ENCODE measurements at regions of chr7 and their contacts with region 1.

Region 1: GRCh38 chr7:107879400-107880035 is 11.5 kb upstream of the DLD start:
- DNase-seq: no peak
- H3K4me3 ChIP-seq: no peak overlapping the region
- H3K27ac ChIP-seq: no peak overlapping the region
- H3K4me1 ChIP-seq: peaks cover 0 to 5% (median 0%) of the 10 kb centered on the region in 4 donors
- H3K27me3 ChIP-seq: no peaks in the 10 kb centered on the region
- CTCF ChIP-seq: peak; percentile 74 to 87 (median 86)
- EP300 ChIP-seq: no peak
- POLR2A ChIP-seq: no peak

Region 2: DNA sequence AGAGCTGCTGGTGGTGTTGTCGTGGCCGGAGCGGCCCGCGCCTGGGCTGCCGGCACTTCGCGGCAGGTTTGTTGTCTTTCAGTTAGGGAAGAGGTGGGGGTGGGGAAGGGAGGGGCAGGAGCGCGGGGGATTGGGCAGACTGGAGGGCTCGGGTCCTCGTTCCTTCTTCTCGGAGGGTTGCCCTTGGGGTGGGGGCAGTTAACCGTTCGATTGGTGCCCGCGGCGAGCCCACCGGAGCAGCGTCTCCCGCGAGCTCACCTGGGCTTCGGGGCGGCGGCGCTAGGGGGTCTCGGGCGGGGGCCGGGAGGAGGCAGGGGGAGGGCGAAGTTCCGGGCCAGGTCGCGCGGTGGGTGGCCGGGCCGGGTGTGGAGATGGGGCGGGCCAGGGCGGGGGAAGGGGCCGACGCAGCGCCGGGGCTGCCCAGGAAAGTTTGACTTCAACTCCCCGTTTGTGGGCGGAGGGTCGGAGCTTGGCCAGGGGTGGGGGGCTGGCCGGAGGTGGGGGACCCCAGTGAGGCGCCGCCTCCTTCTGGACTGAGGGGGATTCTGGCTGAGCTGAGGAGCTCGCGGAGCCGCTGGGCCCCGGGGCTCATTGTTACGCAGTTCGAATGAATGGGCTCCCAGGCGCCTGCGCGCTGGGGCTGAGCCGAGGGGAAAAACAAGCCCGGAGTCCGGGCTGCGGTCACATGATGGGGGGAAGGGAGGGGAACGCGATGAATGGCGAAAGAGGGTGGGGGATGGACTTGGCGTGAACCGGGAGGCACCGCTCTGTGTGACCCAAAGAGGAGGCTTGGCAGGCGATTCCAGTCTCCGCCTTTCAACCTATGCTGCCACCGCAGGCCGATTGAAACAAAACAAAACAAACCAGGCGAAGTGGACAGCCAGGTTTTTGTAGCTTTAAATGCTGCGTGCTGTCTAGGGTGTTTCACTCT is 710.1 kb before region 1 on chr7:
- intact Hi-C with region 1: loop called (anchors 10 kb)
- DNase-seq: peak; percentile 99
- H3K4me3 ChIP-seq: peak overlapping the region; percentile 93 to 99 (median 96)
- H3K27ac ChIP-seq: peak overlapping the region; percentile 99 to 100 (median 100)
- H3K4me1 ChIP-seq: peaks cover 41 to 50% (median 44%) of the 10 kb centered on the region in 4 donors
- H3K27me3 ChIP-seq: no peaks in the 10 kb centered on the region
- CTCF ChIP-seq: peak in 2 of 3 experiments; percentile 15 to 18
- EP300 ChIP-seq: no peak
- POLR2A ChIP-seq: no peak

Region 3: DNA sequence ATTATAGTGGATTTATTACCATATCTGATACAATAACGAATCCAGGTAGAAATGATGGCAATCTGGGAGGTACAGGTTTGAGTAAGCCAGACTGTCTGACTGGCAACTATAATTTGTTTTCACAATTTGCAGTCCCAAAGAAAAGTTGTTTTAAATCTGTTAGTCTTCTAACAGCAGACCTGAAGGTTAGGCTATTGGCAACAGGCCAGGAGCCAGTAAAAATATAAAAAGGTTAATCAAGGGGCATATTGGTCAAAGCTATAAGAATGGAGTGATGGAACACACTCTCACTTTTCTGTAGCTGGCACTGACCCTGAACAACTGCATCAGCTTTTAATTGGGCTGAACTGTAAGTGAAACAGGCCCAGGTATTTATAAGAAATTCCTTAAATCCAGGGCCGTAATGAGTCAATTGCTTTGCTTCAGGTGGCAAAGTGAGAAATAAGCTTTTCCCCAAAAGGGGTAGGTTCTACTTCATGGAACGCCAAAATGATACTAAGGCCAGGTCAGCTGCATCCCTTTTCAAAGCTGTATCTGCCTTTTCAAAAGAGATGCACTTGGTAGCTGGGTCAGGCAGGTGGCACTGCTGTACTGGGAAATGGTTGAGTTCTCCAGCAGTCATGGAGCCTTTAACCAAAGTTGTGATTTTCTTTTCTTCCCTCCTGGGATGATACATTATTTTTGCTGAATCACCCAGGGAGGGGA is 416.6 kb before region 1 on chr7:
- intact Hi-C with region 1: loop called (anchors 2 kb)
- DNase-seq: no peak
- H3K4me3 ChIP-seq: no peak overlapping the region
- H3K27ac ChIP-seq: no peak overlapping the region
- H3K4me1 ChIP-seq: peaks cover 0 to 5% (median 0%) of the 10 kb centered on the region in 4 donors
- H3K27me3 ChIP-seq: no peaks in the 10 kb centered on the region
- CTCF ChIP-seq: peak; percentile 77 to 78 (median 77)
- EP300 ChIP-seq: no peak
- POLR2A ChIP-seq: no peak

Region 4: GRCh38 chr7:107563775-107564552 is 315.6 kb before region 1 on chr7 and contains the starts of genes COG5 and DUS4L:
- intact Hi-C with region 1: loop called (anchors 10 kb)
- DNase-seq: peak; percentile 93
- H3K4me3 ChIP-seq: peak within 1 kb of the TSS; percentile 90 to 97 (median 94)
- H3K27ac ChIP-seq: peak within 1 kb of the TSS; percentile 92 to 96 (median 94)
- H3K4me1 ChIP-seq: peaks cover 30 to 53% (median 44%) of the 10 kb centered on the region in 4 donors
- H3K27me3 ChIP-seq: no peaks in the 10 kb centered on the region
- CTCF ChIP-seq: no peak
- EP300 ChIP-seq: no peak
- POLR2A ChIP-seq: peak; percentile 10
- total RNA-seq, gene COG5: 20.3 to 33.4 (median 24.9) TPM
- total RNA-seq, gene DUS4L: 3.6 to 7.5 (median 6.6) TPM

Region 5: GRCh38 chr7:107743567-107744344 is 135.8 kb before region 1 on chr7 and contains the start of gene CBLL1:
- intact Hi-C with region 1: loop called (anchors 1 kb)
- DNase-seq: peak; percentile 98
- H3K4me3 ChIP-seq: peak within 1 kb of the TSS; percentile 80 to 94 (median 88)
- H3K27ac ChIP-seq: peak within 1 kb of the TSS; percentile 93 to 96 (median 95)
- H3K4me1 ChIP-seq: peaks cover 27 to 51% (median 49%) of the 10 kb centered on the region in 4 donors
- H3K27me3 ChIP-seq: no peaks in the 10 kb centered on the region
- CTCF ChIP-seq: peak; percentile 64 to 78 (median 75)
- EP300 ChIP-seq: no peak
- POLR2A ChIP-seq: peak; percentile 57
- total RNA-seq, gene CBLL1: 60.1 to 67.3 (median 63.6) TPM

Region 6: DNA sequence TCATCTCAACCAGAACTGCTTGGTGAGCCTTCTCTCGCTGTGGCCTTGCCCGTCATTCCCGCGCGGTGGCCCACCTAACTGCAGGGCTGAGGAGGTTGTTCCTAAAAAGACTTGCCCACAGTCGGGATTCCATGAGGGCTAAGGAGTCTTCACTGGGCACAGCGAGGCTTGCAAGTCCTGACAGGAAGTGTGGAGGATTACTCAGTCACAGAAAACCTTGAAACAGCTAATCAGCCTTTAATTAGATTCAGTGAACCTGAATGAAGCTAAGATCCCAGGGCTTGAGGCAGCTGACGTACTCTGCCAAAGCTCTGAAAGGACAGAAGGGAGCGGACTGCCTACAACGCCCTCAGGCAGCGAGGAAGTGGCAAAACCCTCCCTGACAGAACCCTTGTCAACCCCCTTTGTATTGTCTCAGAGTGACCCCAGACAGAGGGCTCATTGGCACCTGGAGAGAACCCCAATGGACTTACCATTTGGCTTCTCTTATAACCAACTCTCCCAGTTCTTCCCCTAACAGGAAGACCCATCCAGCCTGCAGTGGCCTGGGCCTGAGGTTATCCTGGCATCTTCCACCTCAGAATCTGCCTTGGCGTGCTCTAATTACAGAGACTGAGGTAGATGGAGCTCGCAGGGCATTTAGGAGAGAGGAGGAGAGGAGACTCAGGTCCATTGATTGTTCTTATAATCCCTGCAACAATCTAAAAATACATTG is 253.2 kb after region 1 on chr7:
- intact Hi-C with region 1: no loop called
- DNase-seq: peak; percentile 70
- H3K4me3 ChIP-seq: no peak overlapping the region
- H3K27ac ChIP-seq: no peak overlapping the region
- H3K4me1 ChIP-seq: peaks cover 0 to 14% (median 9%) of the 10 kb centered on the region in 4 donors
- H3K27me3 ChIP-seq: no peaks in the 10 kb centered on the region
- CTCF ChIP-seq: no peak
- EP300 ChIP-seq: no peak
- POLR2A ChIP-seq: no peak

Region 7: DNA sequence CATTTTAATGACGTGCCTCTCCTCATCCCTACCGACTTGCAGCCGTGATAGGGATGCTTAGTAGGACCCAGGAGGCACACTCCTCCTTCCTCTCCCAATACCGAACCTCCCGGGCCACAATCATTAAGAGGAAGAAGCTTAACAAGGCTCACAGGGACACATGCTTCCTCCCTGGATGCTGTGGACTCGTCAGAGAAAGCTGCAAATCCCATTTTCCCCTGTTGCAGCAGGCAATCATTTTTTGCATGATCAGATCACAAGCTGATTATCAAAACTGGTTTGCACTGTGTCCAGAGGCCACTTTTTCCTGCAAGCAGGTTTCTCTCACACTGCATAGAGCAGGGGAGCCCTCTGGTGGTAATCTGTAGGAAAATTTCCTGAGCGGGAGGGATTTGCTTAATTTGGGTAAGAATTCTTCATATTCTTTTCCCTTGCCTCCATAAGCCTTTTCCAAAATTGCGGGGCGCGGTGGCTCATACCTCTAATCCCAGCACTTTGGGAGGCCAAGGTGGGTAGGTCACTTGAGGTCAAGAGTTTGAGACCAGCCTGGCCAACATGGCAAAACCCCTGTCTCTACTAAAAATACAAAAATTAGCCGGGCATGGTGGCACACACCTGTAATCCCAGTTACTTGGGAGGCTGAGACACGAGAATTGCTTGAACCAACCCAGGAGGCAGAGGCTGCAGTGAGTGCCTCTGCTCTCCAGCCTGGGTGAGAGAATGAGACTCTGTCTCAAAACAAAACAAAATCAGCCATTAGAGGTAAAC is 266.7 kb after region 1 on chr7:
- intact Hi-C with region 1: loop called (anchors 5 kb)
- DNase-seq: no peak
- H3K4me3 ChIP-seq: peak overlapping the region; percentile 12 to 46 (median 31)
- H3K27ac ChIP-seq: peak overlapping the region in 2 of 4 donors; percentile 63 to 65
- H3K4me1 ChIP-seq: peaks cover 6 to 44% (median 38%) of the 10 kb centered on the region in 4 donors
- H3K27me3 ChIP-seq: no peaks in the 10 kb centered on the region
- CTCF ChIP-seq: peak; percentile 86 to 95 (median 92)
- EP300 ChIP-seq: no peak
- POLR2A ChIP-seq: no peak

Measured in esophagus muscularis mucosa (tissue), 4 donors.